ENCODE measurements at regions of chr4 and their contacts with region 1.

Region 1: GRCh38 chr4:74320559-74321118 is 12.4 kb downstream of the EPGN start:
- DNase-seq: peak; percentile 66 to 72
- H3K4me3 ChIP-seq: no peak overlapping the region
- H3K4me3 Mint-ChIP-seq: peak overlapping the region; percentile 1
- H3K27ac Mint-ChIP-seq: no peak overlapping the region
- H3K4me1 ChIP-seq: peaks cover 17% of the 10 kb centered on the region; the same call in 1 of the 2 replicates
- H3K4me1 Mint-ChIP-seq: peaks cover 10% of the 10 kb centered on the region
- H3K27me3 ChIP-seq: no peaks in the 10 kb centered on the region
- H3K27me3 Mint-ChIP-seq: no peaks in the 10 kb centered on the region
- CTCF ChIP-seq: peak; percentile 48 to 66

Region 2: GRCh38 chr4:73698217-73698616 is 622.4 kb before region 1 on chr4:
- CTCF ChIA-PET with region 1: no interaction called
- POLR2A ChIA-PET with region 1: no interaction called
- intact Hi-C with region 1: no loop called
- DNase-seq: no peak
- H3K4me3 ChIP-seq: no peak overlapping the region
- H3K4me3 Mint-ChIP-seq: no peak overlapping the region
- H3K27ac Mint-ChIP-seq: no peak overlapping the region
- H3K4me1 ChIP-seq: no peaks in the 10 kb centered on the region
- H3K4me1 Mint-ChIP-seq: no peaks in the 10 kb centered on the region
- H3K27me3 ChIP-seq: no peaks in the 10 kb centered on the region
- H3K27me3 Mint-ChIP-seq: peaks cover 5% of the 10 kb centered on the region
- CTCF ChIP-seq: no peak

Region 3: GRCh38 chr4:74072739-74073138 is 247.9 kb before region 1 on chr4:
- CTCF ChIA-PET with region 1: no interaction called
- POLR2A ChIA-PET with region 1: no interaction called
- intact Hi-C with region 1: no loop called
- DNase-seq: no peak
- H3K4me3 ChIP-seq: no peak overlapping the region
- H3K4me3 Mint-ChIP-seq: no peak overlapping the region
- H3K27ac Mint-ChIP-seq: no peak overlapping the region
- H3K4me1 ChIP-seq: no peaks in the 10 kb centered on the region
- H3K4me1 Mint-ChIP-seq: no peaks in the 10 kb centered on the region
- H3K27me3 ChIP-seq: no peaks in the 10 kb centered on the region
- H3K27me3 Mint-ChIP-seq: no peaks in the 10 kb centered on the region
- CTCF ChIP-seq: no peak

Region 4: GRCh38 chr4:74364652-74365491 is 44.2 kb after region 1 on chr4 and contains the start of gene EREG:
- CTCF ChIA-PET with region 1: no interaction called
- POLR2A ChIA-PET with region 1: no interaction called
- intact Hi-C with region 1: loop called (anchors 1 kb)
- DNase-seq: peak; percentile 73 to 81
- H3K4me3 ChIP-seq: peak within 1 kb of the TSS; percentile 64
- H3K4me3 Mint-ChIP-seq: peak within 1 kb of the TSS; percentile 75
- H3K27ac Mint-ChIP-seq: peak within 1 kb of the TSS; percentile 91
- H3K4me1 ChIP-seq: 0 out of 2 replicates have a peak, but pooled peaks cover 7% of the 10 kb centered on the region
- H3K4me1 Mint-ChIP-seq: peaks cover 14% of the 10 kb centered on the region
- H3K27me3 ChIP-seq: no peaks in the 10 kb centered on the region
- H3K27me3 Mint-ChIP-seq: no peaks in the 10 kb centered on the region
- CTCF ChIP-seq: no peak
- total RNA-seq, gene EREG: 35.5 and 37.0 TPM in 2 replicates

Region 5: GRCh38 chr4:74793757-74794340 is 473.2 kb after region 1 on chr4:
- CTCF ChIA-PET with region 1: interaction called, 3 read pairs
- POLR2A ChIA-PET with region 1: no interaction called
- intact Hi-C with region 1: loop called (anchors 5 kb)
- DNase-seq: peak; percentile 57 to 64
- H3K4me3 ChIP-seq: peak overlapping the region; percentile 43
- H3K4me3 Mint-ChIP-seq: peak overlapping the region; percentile 89
- H3K27ac Mint-ChIP-seq: peak overlapping the region; percentile 54
- H3K4me1 ChIP-seq: no peaks in the 10 kb centered on the region
- H3K4me1 Mint-ChIP-seq: peaks cover 7% of the 10 kb centered on the region
- H3K27me3 ChIP-seq: 0 out of 2 replicates have a peak, but pooled peaks cover 1% of the 10 kb centered on the region
- H3K27me3 Mint-ChIP-seq: peaks cover 26% of the 10 kb centered on the region
- CTCF ChIP-seq: peak; percentile 12 to 72

Region 6: GRCh38 chr4:74874753-74875367 is 554.2 kb after region 1 on chr4:
- CTCF ChIA-PET with region 1: no interaction called
- POLR2A ChIA-PET with region 1: no interaction called
- intact Hi-C with region 1: loop called (anchors 1 kb)
- DNase-seq: peak; percentile 35 to 58
- H3K4me3 ChIP-seq: no peak overlapping the region
- H3K4me3 Mint-ChIP-seq: no peak overlapping the region
- H3K27ac Mint-ChIP-seq: no peak overlapping the region
- H3K4me1 ChIP-seq: no peaks in the 10 kb centered on the region
- H3K4me1 Mint-ChIP-seq: no peaks in the 10 kb centered on the region
- H3K27me3 ChIP-seq: no peaks in the 10 kb centered on the region
- H3K27me3 Mint-ChIP-seq: peaks cover 7% of the 10 kb centered on the region
- CTCF ChIP-seq: peak; percentile 73 to 83

Measured in Caco-2 (cell line).